Transverse colon (tissue), 4 donors: ENCODE measurements at regions of chr1 and their contacts with region 1.

Region 1: DNA sequence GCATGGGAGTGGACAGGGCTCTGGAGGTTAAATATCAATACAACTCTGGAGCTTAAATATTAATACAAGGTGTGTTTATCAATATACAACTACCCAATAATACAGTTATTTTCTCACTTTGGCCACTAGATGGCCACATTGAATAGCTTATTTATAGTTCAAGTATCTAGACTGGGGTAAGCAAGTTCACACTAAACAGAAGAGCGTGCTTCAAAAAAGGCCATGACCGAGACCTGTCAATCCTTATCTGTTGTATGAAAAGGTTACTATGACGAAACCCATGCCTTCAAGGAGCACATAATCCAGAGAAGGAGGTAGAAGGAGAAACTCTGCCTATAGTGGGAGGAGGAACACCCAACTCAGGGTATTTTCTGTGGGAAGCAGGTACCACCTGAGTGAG is 29.1 kb downstream of the CHML start:
- DNase-seq: no peak
- H3K4me3 ChIP-seq: no peak overlapping the region
- H3K27ac ChIP-seq: no peak overlapping the region
- H3K4me1 ChIP-seq: peaks cover 3 to 44% (median 12%) of the 10 kb centered on the region in 4 donors
- H3K27me3 ChIP-seq: no peaks in the 10 kb centered on the region
- CTCF ChIP-seq: peak; percentile 67 to 82 (median 74)
- EP300 ChIP-seq: no peak
- POLR2A ChIP-seq: no peak

Region 2: DNA sequence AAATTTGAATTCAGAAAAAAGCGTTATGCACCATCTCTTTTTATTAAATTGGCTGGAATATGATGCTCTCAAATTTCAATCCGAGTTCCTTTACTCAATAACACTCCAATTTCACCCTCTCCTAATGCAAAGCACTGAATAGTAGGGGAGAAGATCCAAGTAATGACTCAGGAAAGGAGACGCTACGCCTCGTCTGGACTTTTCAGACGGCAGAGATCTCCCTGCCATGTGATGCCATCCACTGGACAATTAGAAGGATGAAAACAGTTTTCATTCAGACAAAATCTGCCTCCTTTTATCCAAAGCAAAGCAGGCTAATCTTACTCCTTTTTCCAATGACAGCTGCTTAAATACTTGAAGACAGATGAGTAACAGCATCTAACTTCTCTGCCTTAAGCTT is 756.7 kb before region 1 on chr1:
- in situ Hi-C with region 1: no loop called
- intact Hi-C with region 1: no loop called
- DNase-seq: no peak
- H3K4me3 ChIP-seq: no peak overlapping the region
- H3K27ac ChIP-seq: no peak overlapping the region
- H3K4me1 ChIP-seq: no peaks in the 10 kb centered on the region
- H3K27me3 ChIP-seq: no peaks in the 10 kb centered on the region
- CTCF ChIP-seq: no peak
- EP300 ChIP-seq: no peak
- POLR2A ChIP-seq: no peak

Region 3: DNA sequence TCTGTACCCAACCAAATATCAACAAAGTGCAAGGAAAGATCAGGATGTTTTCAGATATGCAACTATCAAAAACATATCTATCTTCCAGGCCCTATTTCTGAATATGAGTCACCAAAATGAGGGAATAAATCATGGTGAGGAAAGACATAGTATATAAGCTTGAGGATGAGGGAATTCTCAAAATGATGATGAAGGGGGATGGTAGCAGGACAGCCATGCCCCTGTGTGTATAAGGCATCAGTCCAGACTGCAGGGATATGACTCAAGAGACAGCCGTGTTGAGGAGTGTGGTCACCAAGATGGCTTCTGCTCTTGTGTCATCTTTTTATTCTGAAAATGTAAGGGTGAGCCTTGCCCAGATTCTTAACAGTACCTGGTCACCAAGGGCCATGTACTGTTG is 36.6 kb after region 1 on chr1:
- in situ Hi-C with region 1: no loop called
- intact Hi-C with region 1: no loop called
- DNase-seq: no peak
- H3K4me3 ChIP-seq: no peak overlapping the region
- H3K27ac ChIP-seq: no peak overlapping the region
- H3K4me1 ChIP-seq: no peaks in the 10 kb centered on the region
- H3K27me3 ChIP-seq: no peaks in the 10 kb centered on the region
- CTCF ChIP-seq: no peak
- EP300 ChIP-seq: no peak
- POLR2A ChIP-seq: no peak

Region 4: GRCh38 chr1:241722947-241723346 is 111.9 kb after region 1 on chr1:
- in situ Hi-C with region 1: no loop called
- intact Hi-C with region 1: no loop called
- DNase-seq: no peak
- H3K4me3 ChIP-seq: no peak overlapping the region
- H3K27ac ChIP-seq: no peak overlapping the region
- H3K4me1 ChIP-seq: no peaks in the 10 kb centered on the region
- H3K27me3 ChIP-seq: peaks cover 3% of the 10 kb centered on the region
- CTCF ChIP-seq: no peak
- EP300 ChIP-seq: no peak
- POLR2A ChIP-seq: no peak

Region 5: GRCh38 chr1:241998412-241998921 is 387.4 kb after region 1 on chr1:
- in situ Hi-C with region 1: loop called in 2 of 4 experiments (anchors 25 kb)
- intact Hi-C with region 1: no loop called
- DNase-seq: peak; percentile 81
- H3K4me3 ChIP-seq: peak overlapping the region in 2 of 4 donors; percentile 18 to 43
- H3K27ac ChIP-seq: peak overlapping the region; percentile 19 to 43 (median 36)
- H3K4me1 ChIP-seq: peaks cover 0 to 8% (median 5%) of the 10 kb centered on the region in 4 donors
- H3K27me3 ChIP-seq: no peaks in the 10 kb centered on the region
- CTCF ChIP-seq: peak; percentile 51 to 67 (median 55)
- EP300 ChIP-seq: no peak
- POLR2A ChIP-seq: no peak